Activated T-helper 2 cell treated with anti-CD3 and anti-CD28 coated beads, Interferon-gamma antibody, Interleukin-2, Interleukin-4, amounts not matched to agents 10 μg/mL and 5 μg/mL and 100 μg/mL, durations not matched to agents 14 hours and 24 hours and 36 hours (primary cell): ENCODE measurements at regions of chr14 and their contacts with region 1.

Region 1: GRCh38 chr14:74945823-74946682 is 9.3 kb downstream of the PGF start:
- DNase-seq: peak; percentile 63
- H3K4me3 Mint-ChIP-seq: no peak overlapping the region
- H3K27ac Mint-ChIP-seq: no peak overlapping the region
- H3K4me1 Mint-ChIP-seq: peaks cover 23% of the 10 kb centered on the region
- H3K27me3 Mint-ChIP-seq: no peaks in the 10 kb centered on the region

Region 2: GRCh38 chr14:75088574-75089373 is 142.7 kb after region 1 on chr14:
- intact Hi-C with region 1: loop called (anchors 1 kb)
- DNase-seq: no peak
- H3K4me3 Mint-ChIP-seq: no peak overlapping the region
- H3K27ac Mint-ChIP-seq: no peak overlapping the region
- H3K4me1 Mint-ChIP-seq: no peaks in the 10 kb centered on the region
- H3K27me3 Mint-ChIP-seq: no peaks in the 10 kb centered on the region